ENCODE measurements at regions of chr12 and their contacts with region 1.

Region 1: GRCh38 chr12:102095675-102096263 is 24.1 kb downstream of the NUP37 start:
- DNase-seq: peak in 1 of 2 experiments; percentile 41
- H3K4me3 ChIP-seq: no peak overlapping the region
- H3K27ac ChIP-seq: no peak overlapping the region
- H3K4me1 ChIP-seq: no peaks in the 10 kb centered on the region
- H3K27me3 ChIP-seq: no peaks in the 10 kb centered on the region
- CTCF ChIP-seq: peak; percentile 65

Region 2: GRCh38 chr12:102069707-102070106 is 26.1 kb before region 1 on chr12:
- CTCF ChIA-PET with region 1: no interaction called
- POLR2A ChIA-PET with region 1: no interaction called
- intact Hi-C with region 1: no loop called
- DNase-seq: no peak
- H3K4me3 ChIP-seq: no peak overlapping the region
- H3K27ac ChIP-seq: no peak overlapping the region
- H3K4me1 ChIP-seq: no peaks in the 10 kb centered on the region
- H3K27me3 ChIP-seq: no peaks in the 10 kb centered on the region
- CTCF ChIP-seq: no peak

Region 3: DNA sequence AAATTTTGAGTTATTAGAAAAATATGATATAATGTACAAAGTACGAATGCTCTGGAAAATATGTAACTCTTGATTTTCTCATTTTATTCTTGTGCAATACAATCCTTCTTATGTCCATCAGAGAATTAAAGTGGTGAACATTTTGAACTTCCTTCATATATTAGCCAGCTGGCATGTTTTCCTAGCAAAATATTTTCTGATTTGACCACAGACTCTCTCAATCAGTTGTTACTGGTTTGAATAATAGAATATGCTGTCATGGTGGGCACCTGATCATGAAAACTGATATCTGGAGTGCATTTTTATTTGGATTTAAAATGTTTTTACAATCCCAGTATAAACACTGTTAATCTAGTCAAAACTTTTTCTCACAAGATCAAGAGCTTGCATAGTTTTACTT is 48.5 kb after region 1 on chr12:
- CTCF ChIA-PET with region 1: no interaction called
- POLR2A ChIA-PET with region 1: no interaction called
- intact Hi-C with region 1: no loop called
- DNase-seq: no peak
- H3K4me3 ChIP-seq: no peak overlapping the region
- H3K27ac ChIP-seq: no peak overlapping the region
- H3K4me1 ChIP-seq: no peaks in the 10 kb centered on the region
- H3K27me3 ChIP-seq: no peaks in the 10 kb centered on the region
- CTCF ChIP-seq: no peak

Region 4: DNA sequence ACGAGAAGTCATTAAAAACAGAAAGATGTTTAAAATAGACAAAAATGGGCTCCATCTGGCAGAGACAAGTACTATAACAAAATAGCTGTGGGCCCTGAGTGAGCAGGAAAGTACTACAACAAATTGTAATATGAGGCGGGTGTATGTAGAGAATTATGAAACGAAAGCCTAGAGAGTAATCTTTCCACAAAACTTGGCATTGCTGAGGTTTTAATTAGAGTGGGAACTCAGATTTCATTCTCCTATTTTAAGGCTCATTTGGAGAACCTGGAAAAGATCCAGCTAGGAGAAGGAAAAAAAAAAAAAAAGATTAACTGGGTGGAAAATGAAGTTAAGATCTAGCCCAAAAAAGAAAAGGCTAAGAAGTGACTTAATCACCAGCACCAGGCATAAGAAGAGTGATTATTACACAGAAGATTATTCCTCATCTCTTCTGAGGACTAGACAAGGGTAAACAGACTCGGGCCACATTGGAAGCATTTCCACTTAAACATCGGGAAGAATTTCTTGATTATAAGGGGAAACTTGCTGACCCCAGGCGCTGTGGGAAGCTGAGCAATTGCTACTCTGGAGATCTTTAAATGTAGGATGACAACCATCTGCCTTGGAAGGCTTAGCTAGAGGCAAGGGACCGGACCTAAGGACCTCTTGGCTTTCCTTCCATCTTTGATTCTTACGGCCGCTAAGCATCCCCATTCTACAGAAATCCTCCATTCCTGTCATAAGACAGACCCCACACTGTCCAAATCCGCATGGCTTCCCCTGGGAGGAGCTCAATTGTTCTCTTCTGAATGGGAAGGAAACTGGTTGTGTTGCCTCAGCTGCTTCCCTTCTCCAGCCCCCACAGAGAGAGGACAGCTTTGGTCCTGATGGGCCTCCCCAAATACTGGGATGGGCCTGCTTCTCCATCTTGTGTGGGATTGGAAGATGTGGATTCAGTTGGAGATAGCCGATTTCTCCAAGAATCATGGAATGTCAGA is 343.9 kb after region 1 on chr12:
- CTCF ChIA-PET with region 1: no interaction called
- POLR2A ChIA-PET with region 1: no interaction called
- intact Hi-C with region 1: no loop called
- DNase-seq: no peak
- H3K4me3 ChIP-seq: no peak overlapping the region
- H3K27ac ChIP-seq: no peak overlapping the region
- H3K4me1 ChIP-seq: no peaks in the 10 kb centered on the region
- H3K27me3 ChIP-seq: no peaks in the 10 kb centered on the region
- CTCF ChIP-seq: no peak

Region 5: GRCh38 chr12:102484428-102484958 is 388.7 kb after region 1 on chr12:
- CTCF ChIA-PET with region 1: no interaction called
- POLR2A ChIA-PET with region 1: no interaction called
- intact Hi-C with region 1: loop called (anchors 5 kb)
- DNase-seq: peak in 1 of 2 experiments; percentile 21
- H3K4me3 ChIP-seq: no peak overlapping the region
- H3K27ac ChIP-seq: no peak overlapping the region
- H3K4me1 ChIP-seq: 0 out of 2 replicates have a peak, but pooled peaks cover 4% of the 10 kb centered on the region
- H3K27me3 ChIP-seq: no peaks in the 10 kb centered on the region
- CTCF ChIP-seq: peak; percentile 95

Region 6: GRCh38 chr12:102769319-102769916 is 673.6 kb after region 1 on chr12:
- CTCF ChIA-PET with region 1: no interaction called
- POLR2A ChIA-PET with region 1: no interaction called
- intact Hi-C with region 1: loop called (anchors 1 kb)
- DNase-seq: peak; percentile 47 to 48
- H3K4me3 ChIP-seq: no peak overlapping the region
- H3K27ac ChIP-seq: no peak overlapping the region
- H3K4me1 ChIP-seq: no peaks in the 10 kb centered on the region
- H3K27me3 ChIP-seq: no peaks in the 10 kb centered on the region
- CTCF ChIP-seq: peak; percentile 78

Measured in PC-9 (cell line).